ENCODE measurements at regions of chr13 and their contacts with region 1.

Region 1: DNA sequence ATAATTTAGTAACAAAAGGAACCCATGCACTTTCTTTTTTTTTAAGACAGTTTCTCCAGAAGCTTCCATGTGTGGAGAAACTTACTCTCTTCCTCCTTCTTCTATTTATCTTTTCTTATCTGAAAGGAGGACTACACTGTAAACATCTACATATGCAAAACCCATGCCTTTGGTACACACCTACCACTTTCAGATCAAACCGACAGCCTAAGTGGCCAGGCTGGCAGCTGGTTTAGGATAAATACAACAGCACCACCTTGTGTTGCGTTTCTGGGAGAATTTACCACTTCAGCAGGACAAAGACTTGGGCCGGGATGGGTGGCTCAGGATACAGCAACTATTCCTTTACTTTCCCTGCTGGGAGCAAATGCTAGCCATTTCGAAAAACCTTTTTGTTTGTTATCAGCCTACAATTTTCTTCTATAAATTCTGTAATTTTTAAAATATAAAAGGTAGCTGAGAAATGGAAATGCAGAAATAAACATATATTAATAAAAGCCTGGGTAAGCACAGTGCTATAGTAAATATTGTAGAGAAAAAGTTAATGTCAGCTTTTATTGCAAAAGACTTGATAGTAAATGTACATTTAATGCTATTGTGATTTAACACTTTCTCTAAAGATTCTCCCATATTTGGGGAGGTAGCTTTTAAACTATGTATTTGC is 94.0 kb upstream of the RFC3 start:
- DNase-seq: peak; percentile 85
- H3K4me3 ChIP-seq: no peak overlapping the region
- H3K27ac ChIP-seq: no peak overlapping the region
- H3K4me1 ChIP-seq: peaks cover 10% of the 10 kb centered on the region
- H3K27me3 ChIP-seq: no peaks in the 10 kb centered on the region
- CTCF ChIP-seq: peak; percentile 62 to 70
- POLR2A ChIP-seq: no peak

Region 2: GRCh38 chr13:33110713-33111413 is 613.0 kb before region 1 on chr13:
- CTCF ChIA-PET with region 1: no interaction called
- POLR2A ChIA-PET with region 1: no interaction called
- dilution Hi-C with region 1: no loop called
- intact Hi-C with region 1: loop called (anchors 2 kb)
- DNase-seq: peak; percentile 74
- H3K4me3 ChIP-seq: no peak overlapping the region
- H3K27ac ChIP-seq: peak overlapping the region; percentile 38
- H3K4me1 ChIP-seq: peaks cover 21% of the 10 kb centered on the region
- H3K27me3 ChIP-seq: no peaks in the 10 kb centered on the region
- CTCF ChIP-seq: no peak
- POLR2A ChIP-seq: no peak

Region 3: DNA sequence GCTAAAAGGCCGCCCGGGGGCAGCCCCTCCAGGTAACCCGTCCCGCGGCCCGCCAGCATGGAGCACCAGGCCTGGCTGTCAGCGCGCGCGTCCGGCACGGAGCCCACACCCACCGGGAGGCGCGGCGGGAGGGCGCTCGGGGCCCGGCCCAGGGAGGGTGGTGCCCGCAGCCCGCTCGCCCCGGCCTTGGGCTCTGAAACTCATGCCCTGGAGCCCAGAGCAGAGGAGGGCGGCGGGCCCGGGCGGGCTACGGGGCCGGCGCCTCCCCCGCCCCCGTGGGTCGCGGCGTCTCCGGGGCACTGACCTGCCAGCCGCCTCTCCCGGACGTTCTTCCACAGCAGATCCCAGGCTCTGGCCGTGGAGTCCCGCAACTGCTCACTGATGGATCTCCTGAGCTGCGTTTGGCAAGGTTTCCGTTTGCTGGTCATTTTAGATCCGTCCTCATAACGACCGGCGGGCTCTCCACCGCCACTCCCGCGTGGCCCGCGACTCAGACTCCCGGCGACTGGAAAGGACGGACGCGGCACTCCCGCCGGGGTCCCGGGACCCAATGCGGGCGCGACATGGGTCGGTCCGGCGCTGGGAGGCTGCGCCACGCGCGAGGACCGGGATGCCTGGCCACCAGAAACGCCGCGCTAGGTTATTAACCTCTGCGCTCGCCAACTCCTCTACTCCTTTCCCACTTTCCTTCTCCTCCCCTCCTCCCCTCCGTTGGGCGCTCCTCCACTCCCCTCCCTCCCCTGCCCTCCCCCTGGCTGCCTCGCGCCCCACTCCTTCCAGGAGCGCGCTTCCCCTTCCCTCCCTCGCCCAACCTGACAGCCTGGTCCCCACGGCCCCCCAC is 373.7 kb before region 1 on chr13:
- CTCF ChIA-PET with region 1: no interaction called
- POLR2A ChIA-PET with region 1: no interaction called
- dilution Hi-C with region 1: no loop called
- intact Hi-C with region 1: loop called (anchors 10 kb)
- DNase-seq: peak; percentile 49
- H3K4me3 ChIP-seq: peak overlapping the region; percentile 78 to 86 (median 82)
- H3K27ac ChIP-seq: peak overlapping the region; percentile 78
- H3K4me1 ChIP-seq: peaks cover 16% of the 10 kb centered on the region
- H3K27me3 ChIP-seq: no peaks in the 10 kb centered on the region
- CTCF ChIP-seq: no peak
- POLR2A ChIP-seq: no peak

Region 4: DNA sequence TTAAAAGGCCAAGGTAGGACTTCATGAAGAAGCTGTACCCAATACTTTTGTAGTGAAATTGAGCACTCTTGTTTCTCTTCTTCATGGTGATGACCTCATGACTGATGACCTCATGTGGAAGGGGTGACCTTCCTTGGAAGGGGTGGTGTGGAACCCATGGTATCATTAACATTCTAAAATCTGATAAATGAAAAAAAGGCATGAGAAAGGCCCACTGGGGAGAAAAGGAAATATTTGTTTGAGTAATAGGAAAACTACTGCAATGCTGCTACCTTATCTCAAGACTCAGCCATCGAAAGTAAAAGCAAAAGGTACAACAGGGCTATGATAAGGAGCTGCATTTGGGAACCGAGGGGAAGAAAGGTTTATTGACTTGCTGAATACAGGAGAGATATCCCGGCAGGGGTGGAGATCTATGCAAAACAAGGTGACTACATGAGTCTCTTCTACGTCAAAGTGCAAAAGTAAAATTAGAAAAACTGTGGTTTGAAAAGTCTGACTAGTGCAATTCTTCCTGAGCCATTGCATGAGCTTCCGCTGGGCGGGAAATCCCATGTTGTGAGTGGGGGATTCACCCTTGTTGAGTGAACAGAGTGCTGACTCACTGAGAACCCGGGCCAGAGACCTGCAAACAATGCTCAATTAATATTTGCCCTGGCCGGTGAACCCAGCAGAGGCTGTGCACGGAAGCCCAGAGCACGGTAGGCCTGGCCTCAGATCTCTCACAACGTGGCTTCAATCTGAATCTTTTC is 44.8 kb before region 1 on chr13:
- CTCF ChIA-PET with region 1: interaction called, 5 read pairs
- POLR2A ChIA-PET with region 1: no interaction called
- dilution Hi-C with region 1: no loop called
- intact Hi-C with region 1: loop called (anchors 5 kb)
- DNase-seq: peak; percentile 95
- H3K4me3 ChIP-seq: peak overlapping the region in 1 of 3 experiments; percentile 0
- H3K27ac ChIP-seq: peak overlapping the region; percentile 75
- H3K4me1 ChIP-seq: peaks cover 15% of the 10 kb centered on the region
- H3K27me3 ChIP-seq: no peaks in the 10 kb centered on the region
- CTCF ChIP-seq: no peak
- POLR2A ChIP-seq: peak; percentile 38